SK-N-SH (cell line): ENCODE measurements at regions of chr6 and their contacts with region 1.

Region 1: GRCh38 chr6:110981202-110981600 is 637 bp upstream of the RPF2 start:
- DNase-seq: no peak
- H3K4me3 ChIP-seq: peak overlapping the region; percentile 82 to 91
- H3K27ac ChIP-seq: peak overlapping the region; percentile 9 to 86; a peak in 3 of 4 replicates
- H3K4me1 ChIP-seq: peaks cover 0 to 4% of the 10 kb centered on the region in 2 experiments; a peak in 1 of 4 replicates
- H3K27me3 ChIP-seq: no peaks in the 10 kb centered on the region
- CTCF ChIP-seq: no peak
- EP300 ChIP-seq: no peak
- RAD21 ChIP-seq: no peak

Region 2: DNA sequence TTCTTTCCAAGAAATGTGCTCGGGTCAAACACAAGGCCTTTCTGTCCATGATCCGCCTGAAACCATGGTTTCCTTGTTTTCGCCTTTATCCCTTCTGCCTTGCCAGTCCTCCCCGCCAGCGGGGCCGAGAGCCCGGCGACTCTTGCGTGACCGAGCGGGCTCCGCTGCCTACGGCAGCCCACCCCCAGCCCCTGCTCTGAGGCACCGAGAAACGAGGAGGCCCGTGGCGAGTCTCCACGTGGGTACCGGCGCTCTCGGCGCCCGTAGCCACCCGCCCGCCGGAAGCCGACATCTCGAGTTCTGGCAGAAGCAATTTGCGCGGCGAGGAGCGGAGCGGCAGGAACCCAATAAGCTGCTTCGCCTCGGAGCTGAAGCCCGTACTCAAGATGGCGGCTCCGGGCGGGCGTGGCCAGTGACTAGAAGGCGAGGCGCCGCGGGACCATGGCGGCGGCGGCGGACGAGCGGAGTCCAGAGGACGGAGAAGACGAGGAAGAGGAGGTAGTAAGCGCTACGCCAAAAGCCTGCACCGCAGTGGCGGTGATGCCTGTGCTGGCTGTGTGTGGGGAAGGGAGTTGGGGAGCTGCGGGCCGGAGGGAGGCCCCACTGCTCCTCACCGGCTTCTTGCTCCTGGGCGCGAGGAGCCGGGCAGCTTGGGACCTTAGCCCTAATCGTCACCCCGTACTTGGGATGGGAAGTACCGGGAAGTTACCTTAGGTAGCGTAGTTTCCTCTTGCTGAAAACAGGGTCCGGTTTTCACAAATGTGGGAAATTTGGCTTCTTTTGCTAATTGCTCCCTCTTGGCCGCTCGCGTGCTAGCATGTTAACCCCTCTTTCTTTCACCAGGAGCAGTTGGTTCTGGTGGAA is 22.6 kb before region 1 on chr6 and contains the start of gene GTF3C6:
- CTCF ChIA-PET with region 1: no interaction called
- POLR2A ChIA-PET with region 1: interaction called, 17 read pairs
- DNase-seq: peak; percentile 91
- H3K4me3 ChIP-seq: peak within 1 kb of the TSS; percentile 63 to 74
- H3K27ac ChIP-seq: peak within 1 kb of the TSS; percentile 88 to 90
- H3K4me1 ChIP-seq: peaks cover 0 to 6% of the 10 kb centered on the region in 2 experiments; a peak in 1 of 4 replicates
- H3K27me3 ChIP-seq: no peaks in the 10 kb centered on the region
- CTCF ChIP-seq: no peak
- EP300 ChIP-seq: 0 out of 4 replicates have a peak, but pooled peaks of 1 of the 2 experiments have one; percentile 24
- RAD21 ChIP-seq: no peak
- polyA plus RNA-seq, gene GTF3C6: 28.4 and 38.5 TPM in 2 replicates

Region 3: GRCh38 chr6:111050261-111051023 is 69.2 kb after region 1 on chr6:
- CTCF ChIA-PET with region 1: no interaction called
- POLR2A ChIA-PET with region 1: no interaction called
- DNase-seq: no peak
- H3K4me3 ChIP-seq: no peak overlapping the region
- H3K27ac ChIP-seq: no peak overlapping the region
- H3K4me1 ChIP-seq: no peaks in the 10 kb centered on the region
- H3K27me3 ChIP-seq: no peaks in the 10 kb centered on the region
- CTCF ChIP-seq: no peak
- EP300 ChIP-seq: no peak
- RAD21 ChIP-seq: no peak

Region 4: GRCh38 chr6:111061508-111061907 is 80.3 kb after region 1 on chr6:
- CTCF ChIA-PET with region 1: no interaction called
- POLR2A ChIA-PET with region 1: no interaction called
- DNase-seq: no peak
- H3K4me3 ChIP-seq: no peak overlapping the region
- H3K27ac ChIP-seq: no peak overlapping the region
- H3K4me1 ChIP-seq: no peaks in the 10 kb centered on the region; a peak in 1 of 4 replicates
- H3K27me3 ChIP-seq: no peaks in the 10 kb centered on the region; the same call in 1 of the 2 replicates
- CTCF ChIP-seq: no peak
- EP300 ChIP-seq: no peak
- RAD21 ChIP-seq: no peak